Activated T-helper 2 cell treated with anti-CD3 and anti-CD28 coated beads, Interferon-gamma antibody, Interleukin-2, Interleukin-4, amounts not matched to agents 10 μg/mL and 5 μg/mL and 100 μg/mL, durations not matched to agents 14 hours and 24 hours and 36 hours (primary cell): ENCODE measurements at regions of chr11 and their contacts with region 1.

Region 1: GRCh38 chr11:47578524-47579460 is at the starts of genes KBTBD4 and NDUFS3:
- DNase-seq: peak; percentile 88
- H3K4me3 Mint-ChIP-seq: peak within 1 kb of the TSS; percentile 100
- H3K27ac Mint-ChIP-seq: peak within 1 kb of the TSS; percentile 98
- H3K4me1 Mint-ChIP-seq: peaks cover 25% of the 10 kb centered on the region
- H3K27me3 Mint-ChIP-seq: no peaks in the 10 kb centered on the region
- total RNA-seq, gene KBTBD4: 14.2 and 15.3 TPM in 2 replicates
- total RNA-seq, gene NDUFS3: 132 and 142 TPM in 2 replicates

Region 2: DNA sequence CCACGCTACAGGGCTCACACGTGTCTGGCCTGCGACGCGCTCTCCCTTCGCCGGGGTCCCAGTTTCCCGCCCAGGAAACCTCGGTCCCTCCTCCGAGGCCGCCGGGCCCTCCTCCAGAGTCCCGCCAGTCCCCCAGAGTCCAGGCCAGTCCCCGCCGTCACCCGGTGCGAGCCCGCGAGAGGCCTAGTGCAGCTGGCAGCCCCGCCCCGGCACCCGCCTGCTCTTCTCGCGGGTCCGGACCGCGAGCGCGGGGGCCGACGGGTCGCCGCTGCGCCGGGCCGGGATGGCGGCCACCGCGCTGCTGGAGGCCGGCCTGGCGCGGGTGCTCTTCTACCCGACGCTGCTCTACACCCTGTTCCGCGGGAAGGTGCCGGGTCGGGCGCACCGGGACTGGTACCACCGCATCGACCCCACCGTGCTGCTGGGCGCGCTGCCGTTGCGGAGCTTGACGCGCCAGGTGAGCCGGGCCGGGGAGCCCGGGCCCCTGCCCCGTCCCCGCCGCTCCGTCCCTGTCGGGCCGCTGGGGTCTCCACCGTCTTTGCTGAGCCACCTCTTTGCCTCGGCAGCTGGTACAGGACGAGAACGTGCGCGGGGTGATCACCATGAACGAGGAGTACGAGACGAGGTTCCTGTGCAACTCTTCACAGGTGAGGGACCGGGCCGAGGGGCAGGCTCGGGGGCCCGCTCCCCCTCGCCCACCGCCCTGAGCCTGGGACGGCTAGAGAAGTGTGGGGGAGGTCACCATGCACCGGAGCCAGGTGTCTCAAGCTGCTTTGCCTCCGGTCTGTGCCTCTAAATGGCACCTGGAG is 13.2 kb before region 1 on chr11 and contains the start of gene PTPMT1:
- intact Hi-C with region 1: loop called (anchors 1 kb)
- DNase-seq: peak; percentile 56
- H3K4me3 Mint-ChIP-seq: peak within 1 kb of the TSS; percentile 83
- H3K27ac Mint-ChIP-seq: peak within 1 kb of the TSS; percentile 76
- H3K4me1 Mint-ChIP-seq: peaks cover 15% of the 10 kb centered on the region
- H3K27me3 Mint-ChIP-seq: no peaks in the 10 kb centered on the region
- total RNA-seq, gene PTPMT1: 50.7 and 53.9 TPM in 2 replicates

Region 3: DNA sequence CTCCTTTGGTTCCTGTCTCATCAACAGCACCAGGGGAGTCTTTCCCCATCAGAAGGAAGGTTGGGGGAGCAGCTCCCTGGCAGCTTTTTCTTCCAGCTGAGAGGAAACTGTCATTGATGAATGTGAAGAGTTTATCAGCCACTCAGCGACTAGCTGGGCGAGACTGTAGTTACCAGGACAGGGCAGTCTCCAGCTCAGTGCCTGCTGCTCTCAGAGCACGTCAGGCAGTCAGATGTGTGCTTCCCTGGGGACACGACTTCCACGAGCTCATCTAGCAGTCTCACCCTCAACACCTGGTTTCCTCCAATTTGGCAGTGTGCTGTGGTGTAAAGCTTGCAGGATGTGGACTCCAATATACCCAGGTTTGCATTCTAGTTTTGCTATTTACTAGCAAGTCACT is 27.9 kb after region 1 on chr11:
- intact Hi-C with region 1: no loop called
- DNase-seq: no peak
- H3K4me3 Mint-ChIP-seq: no peak overlapping the region
- H3K27ac Mint-ChIP-seq: no peak overlapping the region
- H3K4me1 Mint-ChIP-seq: peaks cover 5% of the 10 kb centered on the region
- H3K27me3 Mint-ChIP-seq: no peaks in the 10 kb centered on the region

Region 4: GRCh38 chr11:47847892-47848635 is 269.3 kb after region 1 on chr11 and contains the start of gene NUP160:
- intact Hi-C with region 1: loop called (anchors 10 kb)
- DNase-seq: peak; percentile 85
- H3K4me3 Mint-ChIP-seq: peak within 1 kb of the TSS; percentile 97
- H3K27ac Mint-ChIP-seq: peak within 1 kb of the TSS; percentile 98
- H3K4me1 Mint-ChIP-seq: peaks cover 33% of the 10 kb centered on the region
- H3K27me3 Mint-ChIP-seq: no peaks in the 10 kb centered on the region
- total RNA-seq, gene NUP160: 81.2 and 84.7 TPM in 2 replicates

Region 5: DNA sequence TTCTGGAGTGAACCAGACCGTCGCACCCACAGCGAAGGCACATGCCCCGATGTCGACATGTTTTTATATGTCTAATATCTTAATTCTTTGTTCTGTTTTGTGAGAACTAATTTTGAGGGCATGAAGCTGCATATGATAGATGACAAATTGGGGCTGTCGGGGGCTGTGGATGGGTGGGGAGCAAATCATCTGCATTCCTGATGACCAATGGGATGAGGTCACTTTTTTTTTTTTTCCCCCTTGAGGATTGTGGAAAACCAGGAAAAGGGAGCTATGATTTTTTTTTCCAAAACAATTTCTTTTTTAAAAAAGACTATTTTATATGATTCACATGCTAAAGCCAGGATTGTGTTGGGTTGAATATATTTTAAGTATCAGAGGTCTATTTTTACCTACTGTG is 588.6 kb after region 1 on chr11:
- intact Hi-C with region 1: no loop called
- DNase-seq: no peak
- H3K4me3 Mint-ChIP-seq: no peak overlapping the region
- H3K27ac Mint-ChIP-seq: no peak overlapping the region
- H3K4me1 Mint-ChIP-seq: peaks cover 10% of the 10 kb centered on the region
- H3K27me3 Mint-ChIP-seq: no peaks in the 10 kb centered on the region